ENCODE measurements at regions of chr20 and their contacts with region 1.

Region 1: GRCh38 chr20:34312544-34313217 is 9.5 kb upstream of the AHCY start:
- DNase-seq: peak; percentile 83 to 90 (median 86)
- ATAC-seq: peak; percentile 93 to 99 (median 98)
- H3K4me3 ChIP-seq: peak overlapping the region in 7 of 12 donors; percentile 15 to 45 (median 33)
- H3K27ac ChIP-seq: no peak overlapping the region
- H3K4me1 ChIP-seq: peaks cover 0 to 20% (median 11%) of the 10 kb centered on the region in 12 donors
- H3K27me3 ChIP-seq: peaks cover 0 to 17% (median 0%) of the 10 kb centered on the region in 9 donors
- CTCF ChIP-seq: peak; percentile 97 to 100 (median 99)
- POLR2A ChIP-seq: no peak

Region 2: DNA sequence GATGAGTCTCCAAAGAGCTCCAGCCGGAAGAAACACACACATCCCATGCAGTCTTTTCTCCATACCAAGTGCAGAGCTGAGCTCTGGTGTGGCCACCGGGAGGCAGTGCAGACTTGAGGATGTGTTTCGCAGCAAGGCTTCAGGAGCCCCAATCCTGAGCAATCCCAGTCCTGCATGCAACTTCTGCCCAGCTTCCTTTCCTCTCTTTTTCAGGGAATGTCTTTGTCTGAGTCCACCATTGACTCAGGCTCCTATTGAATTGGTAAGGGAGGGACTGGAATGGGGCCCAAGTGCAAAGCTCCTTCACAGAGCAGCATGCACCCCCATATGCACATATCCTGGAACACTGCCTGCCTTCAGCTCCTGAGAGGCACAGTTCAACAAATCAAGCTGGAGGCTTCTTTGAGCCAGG is 122.0 kb before region 1 on chr20:
- intact Hi-C with region 1: loop called in 3 of 10 experiments (anchors 1 to 5 kb)
- DNase-seq: peak; percentile 52 to 74 (median 65)
- ATAC-seq: peak; percentile 91 to 96 (median 94)
- H3K4me3 ChIP-seq: no peak overlapping the region
- H3K27ac ChIP-seq: no peak overlapping the region
- H3K4me1 ChIP-seq: peaks cover 0 to 5% (median 0%) of the 10 kb centered on the region in 12 donors
- H3K27me3 ChIP-seq: peaks cover 0 to 5% (median 0%) of the 10 kb centered on the region in 9 donors
- CTCF ChIP-seq: peak; percentile 49 to 82 (median 64)
- POLR2A ChIP-seq: no peak

Region 3: DNA sequence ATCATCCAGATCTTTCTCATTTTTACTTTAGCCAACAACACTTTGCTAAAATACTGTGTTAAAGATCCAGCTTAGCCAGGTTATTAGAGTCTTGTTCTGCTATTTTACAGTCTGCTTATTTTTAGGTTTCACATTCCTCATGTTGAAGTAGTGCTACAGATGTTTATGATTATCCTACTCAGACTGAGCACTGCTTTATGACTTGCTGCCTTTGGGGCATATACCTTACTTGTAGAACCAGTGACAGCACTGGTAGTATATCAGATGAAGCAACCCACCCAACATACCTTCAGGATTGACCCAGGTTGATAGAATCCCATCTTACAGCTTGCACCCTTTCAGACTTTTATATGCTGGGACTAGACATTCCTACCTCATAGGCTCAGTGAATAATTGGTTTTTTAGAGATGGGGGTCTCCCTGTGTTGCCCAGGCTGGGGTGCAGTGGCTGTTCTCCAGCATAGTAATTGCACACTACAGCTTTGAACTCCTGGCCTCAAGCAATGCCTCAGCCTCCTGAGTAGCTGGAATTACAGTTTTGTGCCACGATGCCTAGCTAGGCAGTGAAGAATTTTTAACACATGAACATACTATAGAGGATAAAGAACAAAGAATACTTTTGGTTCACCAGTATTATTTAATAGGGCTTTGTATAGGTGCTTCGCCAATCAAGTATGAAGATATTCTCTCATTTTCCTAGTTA is 139.8 kb after region 1 on chr20:
- intact Hi-C with region 1: no loop called
- DNase-seq: no peak
- ATAC-seq: no peak
- H3K4me3 ChIP-seq: no peak overlapping the region
- H3K27ac ChIP-seq: no peak overlapping the region
- H3K4me1 ChIP-seq: peaks cover 0 to 8% (median 0%) of the 10 kb centered on the region in 12 donors
- H3K27me3 ChIP-seq: no peaks in the 10 kb centered on the region
- CTCF ChIP-seq: no peak
- POLR2A ChIP-seq: no peak

Region 4: GRCh38 chr20:34473262-34473883 is 160.7 kb after region 1 on chr20:
- intact Hi-C with region 1: loop called (anchors 2 to 10 kb)
- DNase-seq: peak; percentile 44 to 66 (median 52)
- ATAC-seq: peak; percentile 75 to 90 (median 87)
- H3K4me3 ChIP-seq: no peak overlapping the region
- H3K27ac ChIP-seq: peak overlapping the region in 5 of 12 donors; percentile 3 to 21 (median 11)
- H3K4me1 ChIP-seq: peaks cover 0 to 29% (median 16%) of the 10 kb centered on the region in 12 donors
- H3K27me3 ChIP-seq: no peaks in the 10 kb centered on the region
- CTCF ChIP-seq: peak in 10 of 12 donors; percentile 12 to 56 (median 38)
- POLR2A ChIP-seq: no peak

Region 5: GRCh38 chr20:34516247-34517113 is 203.8 kb after region 1 on chr20 and contains the start of gene DYNLRB1:
- intact Hi-C with region 1: loop called in 6 of 10 experiments (anchors 2 to 10 kb)
- DNase-seq: peak; percentile 97 to 98 (median 98)
- ATAC-seq: peak; percentile 96 to 98 (median 97)
- H3K4me3 ChIP-seq: peak within 1 kb of the TSS; percentile 56 to 95 (median 80)
- H3K27ac ChIP-seq: peak within 1 kb of the TSS; percentile 89 to 99 (median 95)
- H3K4me1 ChIP-seq: peaks cover 0 to 49% (median 31%) of the 10 kb centered on the region in 12 donors
- H3K27me3 ChIP-seq: no peaks in the 10 kb centered on the region
- CTCF ChIP-seq: no peak
- POLR2A ChIP-seq: peak in 1 of 2 donors; percentile 86
- total RNA-seq, gene DYNLRB1: 129 to 376 (median 145) TPM

Region 6: GRCh38 chr20:34522969-34523871 is 210.5 kb after region 1 on chr20:
- intact Hi-C with region 1: loop called in 7 of 10 experiments (anchors 2 to 10 kb)
- DNase-seq: no peak
- ATAC-seq: peak in 3 of 4 donors; percentile 26 to 48 (median 41)
- H3K4me3 ChIP-seq: no peak overlapping the region
- H3K27ac ChIP-seq: peak overlapping the region in 7 of 12 donors; percentile 22 to 62 (median 39)
- H3K4me1 ChIP-seq: peaks cover 4 to 65% (median 50%) of the 10 kb centered on the region in 12 donors
- H3K27me3 ChIP-seq: no peaks in the 10 kb centered on the region
- CTCF ChIP-seq: peak; percentile 14 to 60 (median 42)
- POLR2A ChIP-seq: no peak

Region 7: GRCh38 chr20:34768096-34768495 is 455.4 kb after region 1 on chr20:
- intact Hi-C with region 1: loop called in 7 of 10 experiments (anchors 5 to 10 kb)
- DNase-seq: no peak
- ATAC-seq: no peak
- H3K4me3 ChIP-seq: no peak overlapping the region
- H3K27ac ChIP-seq: no peak overlapping the region
- H3K4me1 ChIP-seq: peaks cover 0 to 10% (median 0%) of the 10 kb centered on the region in 12 donors
- H3K27me3 ChIP-seq: no peaks in the 10 kb centered on the region
- CTCF ChIP-seq: no peak
- POLR2A ChIP-seq: no peak